CD4-positive, alpha-beta T cell (primary cell): ENCODE measurements at regions of chr2 and their contacts with region 1.

Region 1: DNA sequence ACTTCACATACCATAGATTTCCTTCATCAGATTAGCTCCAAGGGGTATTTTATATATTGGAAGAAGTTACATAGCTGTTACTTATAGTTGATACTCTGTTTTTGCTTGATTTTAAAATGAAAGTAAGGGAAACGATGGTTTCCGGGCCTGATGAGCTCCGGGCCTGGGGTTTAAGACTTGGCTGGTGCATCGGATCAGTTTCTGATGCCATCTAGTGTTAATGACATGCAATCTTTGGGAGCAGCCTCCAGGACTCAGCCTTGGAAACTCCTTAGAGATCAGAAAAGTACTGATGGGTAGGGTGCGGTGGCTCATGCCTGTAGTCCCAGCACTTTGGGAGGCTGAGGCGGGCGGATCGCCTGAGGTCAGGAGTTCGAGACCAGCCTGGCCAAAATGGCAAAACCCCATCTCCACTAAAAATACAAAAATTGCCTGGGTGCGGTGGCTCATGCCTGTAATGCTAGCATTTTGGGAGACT is 47.1 kb upstream of the CNOT11 start:
- DNase-seq: peak in 13 of 14 experiments; percentile 15 to 77 (median 26)
- ATAC-seq: peak; percentile 92
- H3K4me3 ChIP-seq: no peak overlapping the region
- H3K4me3 Mint-ChIP-seq: peak overlapping the region; percentile 79
- H3K27ac ChIP-seq: peak overlapping the region in 1 of 2 donors; percentile 24
- H3K27ac Mint-ChIP-seq: peak overlapping the region; percentile 85
- H3K4me1 ChIP-seq: peaks cover 10% of the 10 kb centered on the region
- H3K4me1 Mint-ChIP-seq: peaks cover 14% of the 10 kb centered on the region
- H3K27me3 ChIP-seq: no peaks in the 10 kb centered on the region
- H3K27me3 Mint-ChIP-seq: no peaks in the 10 kb centered on the region
- CTCF ChIP-seq: peak; percentile 69

Region 2: GRCh38 chr2:100262555-100263320 is 942.8 kb before region 1 on chr2:
- CTCF ChIA-PET with region 1: no interaction called
- POLR2A ChIA-PET with region 1: no interaction called
- intact Hi-C with region 1: loop called in 1 of 2 experiments (anchors 10 kb)
- DNase-seq: peak; percentile 19 to 70 (median 44)
- ATAC-seq: peak; percentile 62
- H3K4me3 ChIP-seq: no peak overlapping the region
- H3K4me3 Mint-ChIP-seq: no peak overlapping the region
- H3K27ac ChIP-seq: no peak overlapping the region
- H3K27ac Mint-ChIP-seq: no peak overlapping the region
- H3K4me1 ChIP-seq: no peaks in the 10 kb centered on the region
- H3K4me1 Mint-ChIP-seq: no peaks in the 10 kb centered on the region
- H3K27me3 ChIP-seq: no peaks in the 10 kb centered on the region
- H3K27me3 Mint-ChIP-seq: no peaks in the 10 kb centered on the region
- CTCF ChIP-seq: peak; percentile 89

Region 3: DNA sequence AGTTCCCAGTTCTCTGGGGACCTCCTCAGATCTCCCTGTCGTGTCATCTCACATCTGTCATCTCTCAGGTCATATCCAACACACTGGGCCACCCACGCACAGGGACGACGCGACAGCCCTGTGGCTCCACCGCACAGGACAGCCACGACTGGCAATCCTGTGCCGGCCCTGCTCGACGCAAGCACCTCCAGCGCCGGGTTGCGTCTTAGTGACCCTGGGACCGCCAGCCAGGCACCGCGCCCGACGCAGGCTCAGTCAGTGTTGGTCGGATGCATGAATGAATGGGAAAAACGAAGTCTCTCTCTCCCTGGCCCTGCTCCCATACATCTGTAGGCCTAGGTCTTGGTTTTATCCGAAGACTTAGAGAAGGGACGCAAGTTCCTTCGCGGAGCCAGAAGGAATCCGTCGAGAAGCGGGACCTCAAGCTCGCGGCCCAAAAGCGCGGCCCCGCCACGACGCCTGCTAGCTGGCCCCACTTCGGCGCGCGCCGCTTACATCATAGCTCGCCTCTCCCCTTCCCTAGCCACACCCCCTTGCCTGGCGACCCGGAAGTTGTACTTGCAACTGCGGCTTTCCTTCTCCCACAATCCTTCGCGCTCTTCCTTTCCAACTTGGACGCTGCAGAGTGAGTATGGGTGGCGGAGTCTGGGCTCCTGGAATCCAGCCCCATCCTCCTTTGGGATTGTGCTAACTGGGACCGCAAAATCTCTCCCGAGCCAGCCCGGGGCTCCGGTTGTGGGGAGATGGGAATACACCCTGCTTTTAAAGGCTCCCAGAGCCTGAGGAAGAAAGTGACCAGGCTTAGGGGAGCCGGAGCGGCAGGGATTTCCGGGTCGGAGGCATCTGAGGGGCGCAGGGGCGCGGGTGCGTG is 203.6 kb before region 1 on chr2 and contains the start of gene RPL31:
- CTCF ChIA-PET with region 1: no interaction called
- POLR2A ChIA-PET with region 1: interaction called, 11 read pairs
- intact Hi-C with region 1: no loop called
- DNase-seq: peak; percentile 90 to 98 (median 94)
- ATAC-seq: peak; percentile 95
- H3K4me3 ChIP-seq: peak within 1 kb of the TSS; percentile 82
- H3K4me3 Mint-ChIP-seq: peak within 1 kb of the TSS; percentile 90
- H3K27ac ChIP-seq: peak within 1 kb of the TSS; percentile 80 to 83
- H3K27ac Mint-ChIP-seq: peak within 1 kb of the TSS; percentile 91
- H3K4me1 ChIP-seq: peaks cover 36% of the 10 kb centered on the region
- H3K4me1 Mint-ChIP-seq: peaks cover 52% of the 10 kb centered on the region
- H3K27me3 ChIP-seq: no peaks in the 10 kb centered on the region
- H3K27me3 Mint-ChIP-seq: no peaks in the 10 kb centered on the region
- CTCF ChIP-seq: no peak
- total RNA-seq, gene RPL31: 2,901 to 2,913 TPM

Region 4: GRCh38 chr2:101012706-101013181 is 192.8 kb before region 1 on chr2:
- CTCF ChIA-PET with region 1: interaction called, 4 read pairs
- POLR2A ChIA-PET with region 1: interaction called, 9 read pairs
- intact Hi-C with region 1: loop called (anchors 1 kb)
- DNase-seq: peak in 10 of 14 experiments; percentile 13 to 70 (median 24)
- ATAC-seq: no peak
- H3K4me3 ChIP-seq: no peak overlapping the region
- H3K4me3 Mint-ChIP-seq: no peak overlapping the region
- H3K27ac ChIP-seq: no peak overlapping the region
- H3K27ac Mint-ChIP-seq: no peak overlapping the region
- H3K4me1 ChIP-seq: no peaks in the 10 kb centered on the region
- H3K4me1 Mint-ChIP-seq: peaks cover 20% of the 10 kb centered on the region
- H3K27me3 ChIP-seq: no peaks in the 10 kb centered on the region
- H3K27me3 Mint-ChIP-seq: no peaks in the 10 kb centered on the region
- CTCF ChIP-seq: peak; percentile 88